Activated CD8-positive, alpha-beta memory T cell treated with anti-CD3 and anti-CD28 coated beads, Interleukin-2, amount 10 ng/mL, durations not matched to agents 7 days and 5 days (primary cell): ENCODE measurements at regions of chr3 and their contacts with region 1.

Region 1: GRCh38 chr3:141360888-141361598 is 7.3 kb upstream of the ZBTB38 start:
- DNase-seq: no peak
- ATAC-seq: peak; percentile 84
- H3K4me3 Mint-ChIP-seq: peak overlapping the region; percentile 63
- H3K27ac Mint-ChIP-seq: peak overlapping the region; percentile 75
- H3K4me1 Mint-ChIP-seq: peaks cover 11% of the 10 kb centered on the region
- H3K27me3 Mint-ChIP-seq: peaks cover 3% of the 10 kb centered on the region

Region 2: GRCh38 chr3:141311496-141312353 is 49.3 kb before region 1 on chr3:
- CTCF ChIA-PET with region 1: interaction called, 38 read pairs
- DNase-seq: peak; percentile 100
- ATAC-seq: peak; percentile 95
- H3K4me3 Mint-ChIP-seq: peak overlapping the region; percentile 91
- H3K27ac Mint-ChIP-seq: peak overlapping the region; percentile 98
- H3K4me1 Mint-ChIP-seq: peaks cover 44% of the 10 kb centered on the region
- H3K27me3 Mint-ChIP-seq: no peaks in the 10 kb centered on the region

Region 3: GRCh38 chr3:141386611-141387111 is 25.6 kb after region 1 on chr3:
- CTCF ChIA-PET with region 1: interaction called, 11 read pairs
- DNase-seq: no peak
- ATAC-seq: no peak
- H3K4me3 Mint-ChIP-seq: peak overlapping the region; percentile 18
- H3K27ac Mint-ChIP-seq: peak overlapping the region; percentile 20
- H3K4me1 Mint-ChIP-seq: peaks cover 57% of the 10 kb centered on the region
- H3K27me3 Mint-ChIP-seq: no peaks in the 10 kb centered on the region

Region 4: GRCh38 chr3:141426404-141427034 is 65.5 kb after region 1 on chr3:
- CTCF ChIA-PET with region 1: interaction called, 19 read pairs
- DNase-seq: no peak
- ATAC-seq: no peak
- H3K4me3 Mint-ChIP-seq: no peak overlapping the region
- H3K27ac Mint-ChIP-seq: no peak overlapping the region
- H3K4me1 Mint-ChIP-seq: peaks cover 31% of the 10 kb centered on the region
- H3K27me3 Mint-ChIP-seq: no peaks in the 10 kb centered on the region

Region 5: GRCh38 chr3:141452036-141452435 is 91.0 kb after region 1 on chr3:
- CTCF ChIA-PET with region 1: interaction called, 140 read pairs
- DNase-seq: peak; percentile 72
- ATAC-seq: peak; percentile 90
- H3K4me3 Mint-ChIP-seq: no peak overlapping the region
- H3K27ac Mint-ChIP-seq: no peak overlapping the region
- H3K4me1 Mint-ChIP-seq: peaks cover 12% of the 10 kb centered on the region
- H3K27me3 Mint-ChIP-seq: no peaks in the 10 kb centered on the region

Region 6: GRCh38 chr3:141561426-141562034 is 200.5 kb after region 1 on chr3:
- CTCF ChIA-PET with region 1: interaction called, 12 read pairs
- DNase-seq: peak; percentile 48
- ATAC-seq: no peak
- H3K4me3 Mint-ChIP-seq: no peak overlapping the region
- H3K27ac Mint-ChIP-seq: peak overlapping the region; percentile 52
- H3K4me1 Mint-ChIP-seq: peaks cover 21% of the 10 kb centered on the region
- H3K27me3 Mint-ChIP-seq: no peaks in the 10 kb centered on the region